Dorsolateral prefrontal cortex (tissue), 120 donors: ENCODE measurements at regions of chr5 and their contacts with region 1.

Region 1: DNA sequence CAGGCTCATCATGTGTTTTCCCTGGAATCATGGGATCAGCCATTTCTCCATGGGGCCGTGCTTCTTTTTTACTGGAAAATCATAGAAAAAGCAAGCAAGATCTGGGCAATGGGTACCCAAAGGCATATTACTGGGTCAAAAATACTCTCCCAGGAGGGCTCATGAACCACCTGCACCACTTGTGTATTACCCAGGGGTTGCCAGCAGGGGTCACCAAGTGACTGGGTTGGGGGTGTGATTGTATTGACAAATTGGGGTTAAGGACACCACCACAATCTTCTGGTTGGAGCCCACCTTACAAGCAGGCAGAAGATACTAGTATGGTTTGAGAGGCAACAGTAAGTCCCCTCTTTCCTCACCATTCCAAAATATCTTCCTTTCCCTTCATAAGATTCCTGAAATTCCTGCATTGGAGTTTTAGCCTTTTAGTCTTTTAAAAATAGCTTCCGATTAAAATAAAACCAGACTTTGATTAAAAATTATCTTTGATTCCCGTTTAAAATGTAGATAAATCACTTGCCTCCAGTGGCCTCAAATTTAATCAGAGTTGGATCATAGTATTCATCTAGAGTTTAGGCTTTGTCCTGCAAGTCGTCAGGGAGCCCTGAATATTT is 603.3 kb downstream of the KIF4B start:
- DNase-seq: peak in 9 of 10 donors; percentile 6 to 54 (median 30)
- H3K4me3 ChIP-seq: no peak overlapping the region
- H3K27ac ChIP-seq: no peak overlapping the region
- H3K27me3 ChIP-seq: peaks cover 0 to 1% (median 0%) of the 10 kb centered on the region in 45 donors
- CTCF ChIP-seq: peak; percentile 29 to 82 (median 69)

Region 2: GRCh38 chr5:156824800-156825199 is 1207.9 kb after region 1 on chr5:
- intact Hi-C with region 1: loop called in 1 of 2 experiments (anchors 5 kb)
- DNase-seq: peak in 1 of 10 donors; percentile 19
- H3K4me3 ChIP-seq: no peak overlapping the region
- H3K27ac ChIP-seq: no peak overlapping the region
- H3K27me3 ChIP-seq: no peaks in the 10 kb centered on the region
- CTCF ChIP-seq: peak in 54 of 56 donors; percentile 40 to 82 (median 62)

Region 3: DNA sequence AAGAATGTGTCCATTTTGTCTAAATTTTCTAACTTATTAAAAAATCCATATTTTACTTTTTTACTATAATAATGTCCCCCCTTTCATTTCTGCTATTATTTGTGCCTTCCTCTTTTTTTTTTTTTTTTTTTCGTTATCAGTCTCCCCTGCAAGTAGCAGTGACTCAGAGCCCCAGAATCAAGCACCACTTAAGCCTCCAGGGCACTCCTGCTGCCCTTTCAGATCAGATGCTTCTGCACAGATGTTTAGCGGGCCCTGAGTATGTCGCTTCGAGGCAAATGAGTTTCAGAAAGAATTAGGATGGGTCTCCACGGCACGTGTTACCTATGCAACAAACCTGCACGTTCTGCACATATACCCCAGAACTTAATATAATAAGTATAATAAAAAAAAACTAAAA is 1514.0 kb after region 1 on chr5:
- intact Hi-C with region 1: loop called in 1 of 2 experiments (anchors 5 kb)
- DNase-seq: no peak
- H3K4me3 ChIP-seq: no peak overlapping the region
- H3K27ac ChIP-seq: no peak overlapping the region
- H3K27me3 ChIP-seq: no peaks in the 10 kb centered on the region
- CTCF ChIP-seq: no peak